Tibial artery (tissue), 4 donors: ENCODE measurements at regions of chr4 and their contacts with region 1.

Region 1: DNA sequence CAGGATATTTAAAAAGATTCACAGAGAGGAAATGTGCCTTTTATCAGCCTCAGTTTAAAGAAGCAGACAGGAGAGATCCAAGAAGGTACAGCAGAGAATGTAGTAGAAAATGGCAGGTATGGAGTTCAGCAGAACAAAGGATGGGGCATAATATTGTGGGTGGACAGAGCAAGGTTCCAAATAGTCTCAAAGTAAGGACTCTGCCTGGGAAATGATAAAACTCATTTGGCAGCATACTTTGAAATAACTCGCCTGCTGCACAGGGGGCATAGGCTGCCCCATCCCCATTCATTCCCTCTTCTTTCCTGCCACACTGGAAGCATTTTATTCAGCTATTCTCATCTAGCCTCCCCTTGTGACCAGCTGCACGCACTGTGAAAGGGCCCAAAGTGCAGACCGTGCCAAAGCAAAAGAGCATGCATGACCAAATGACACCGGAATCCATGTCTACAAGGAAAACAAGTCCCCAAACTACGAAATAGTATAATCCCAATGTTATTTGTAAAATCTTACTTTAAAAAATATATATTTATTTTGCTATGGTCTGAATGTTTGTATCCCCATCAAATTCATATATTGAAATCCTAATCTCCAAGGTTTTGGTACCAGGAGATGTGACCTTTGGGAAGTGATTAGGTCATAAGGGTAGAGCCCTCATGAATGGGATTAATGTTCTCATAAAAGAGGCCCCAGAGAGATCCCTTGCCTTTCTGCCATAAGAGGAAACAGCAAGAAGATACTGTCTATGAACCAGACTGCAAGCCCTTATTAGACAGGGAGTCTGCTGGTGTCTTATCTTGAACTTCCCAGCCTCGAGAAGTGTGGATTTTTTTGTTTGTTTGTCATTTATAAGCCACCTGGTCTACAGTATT is 77.4 kb upstream of the PRSS48 start:
- DNase-seq: no peak
- H3K4me3 ChIP-seq: no peak overlapping the region
- H3K27ac ChIP-seq: peak overlapping the region; percentile 43 to 48
- H3K4me1 ChIP-seq: peaks cover 0 to 86% (median 31%) of the 10 kb centered on the region in 4 donors
- H3K27me3 ChIP-seq: no peaks in the 10 kb centered on the region
- CTCF ChIP-seq: no peak

Region 2: DNA sequence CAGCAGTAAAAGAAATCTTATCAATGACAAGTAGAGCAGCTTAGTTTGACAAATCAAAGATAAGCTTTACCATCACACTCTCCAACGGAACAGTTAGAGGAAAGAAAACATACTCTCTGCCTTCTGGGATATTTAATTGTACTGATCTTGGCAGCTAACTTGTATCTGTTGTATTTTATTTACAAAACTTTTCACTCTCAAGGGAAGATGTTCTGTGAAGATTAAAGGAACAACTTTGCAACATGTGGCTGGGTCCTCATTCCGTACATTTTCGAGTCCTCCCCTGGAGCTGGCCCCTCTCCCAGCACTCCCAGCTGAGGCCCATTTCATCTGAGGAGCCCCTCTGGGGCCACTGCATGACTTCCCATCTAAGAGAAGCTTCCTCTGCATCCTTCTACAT is 25.7 kb before region 1 on chr4:
- intact Hi-C with region 1: loop called (anchors 2 kb)
- DNase-seq: peak; percentile 56 to 76
- H3K4me3 ChIP-seq: no peak overlapping the region
- H3K27ac ChIP-seq: no peak overlapping the region
- H3K4me1 ChIP-seq: peaks cover 0 to 13% (median 6%) of the 10 kb centered on the region in 4 donors
- H3K27me3 ChIP-seq: no peaks in the 10 kb centered on the region
- CTCF ChIP-seq: no peak